ENCODE measurements at regions of chr14 and their contacts with region 1.

Region 1: GRCh38 chr14:64503478-64504309 is at the start of gene ZBTB25:
- DNase-seq: peak; percentile 96
- H3K4me3 ChIP-seq: peak within 1 kb of the TSS; percentile 71 to 88 (median 78)
- H3K27ac ChIP-seq: peak within 1 kb of the TSS; percentile 99 to 100 (median 99)
- H3K4me1 ChIP-seq: peaks cover 0 to 57% (median 54%) of the 10 kb centered on the region in 4 donors
- H3K27me3 ChIP-seq: no peaks in the 10 kb centered on the region
- CTCF ChIP-seq: no peak
- EP300 ChIP-seq: peak in 1 of 4 donors; percentile 31
- POLR2A ChIP-seq: peak; percentile 86 to 92
- total RNA-seq, gene ZBTB25: 9.6 to 24.6 (median 11.8) TPM

Region 2: GRCh38 chr14:64387694-64388532 is 115.8 kb before region 1 on chr14 and contains the start of gene MTHFD1:
- intact Hi-C with region 1: loop called (anchors 5 kb)
- DNase-seq: peak; percentile 100
- H3K4me3 ChIP-seq: peak within 1 kb of the TSS; percentile 62 to 72 (median 66)
- H3K27ac ChIP-seq: peak within 1 kb of the TSS; percentile 82 to 88 (median 88)
- H3K4me1 ChIP-seq: peaks cover 0 to 25% (median 21%) of the 10 kb centered on the region in 4 donors
- H3K27me3 ChIP-seq: no peaks in the 10 kb centered on the region
- CTCF ChIP-seq: no peak
- EP300 ChIP-seq: no peak
- POLR2A ChIP-seq: peak; percentile 38 to 42
- total RNA-seq, gene MTHFD1: 20.5 to 36.0 (median 26.1) TPM

Region 3: GRCh38 chr14:64465191-64465822 is 38.4 kb before region 1 on chr14 and contains the start of gene AKAP5:
- intact Hi-C with region 1: loop called (anchors 2 kb)
- DNase-seq: no peak
- H3K4me3 ChIP-seq: peak within 1 kb of the TSS; percentile 55 to 83 (median 74)
- H3K27ac ChIP-seq: peak within 1 kb of the TSS; percentile 72 to 80 (median 78)
- H3K4me1 ChIP-seq: peaks cover 0 to 14% (median 6%) of the 10 kb centered on the region in 4 donors
- H3K27me3 ChIP-seq: no peaks in the 10 kb centered on the region
- CTCF ChIP-seq: no peak
- EP300 ChIP-seq: no peak
- POLR2A ChIP-seq: no peak
- total RNA-seq, gene AKAP5: 0.33 to 1.7 (median 0.76) TPM

Region 4: DNA sequence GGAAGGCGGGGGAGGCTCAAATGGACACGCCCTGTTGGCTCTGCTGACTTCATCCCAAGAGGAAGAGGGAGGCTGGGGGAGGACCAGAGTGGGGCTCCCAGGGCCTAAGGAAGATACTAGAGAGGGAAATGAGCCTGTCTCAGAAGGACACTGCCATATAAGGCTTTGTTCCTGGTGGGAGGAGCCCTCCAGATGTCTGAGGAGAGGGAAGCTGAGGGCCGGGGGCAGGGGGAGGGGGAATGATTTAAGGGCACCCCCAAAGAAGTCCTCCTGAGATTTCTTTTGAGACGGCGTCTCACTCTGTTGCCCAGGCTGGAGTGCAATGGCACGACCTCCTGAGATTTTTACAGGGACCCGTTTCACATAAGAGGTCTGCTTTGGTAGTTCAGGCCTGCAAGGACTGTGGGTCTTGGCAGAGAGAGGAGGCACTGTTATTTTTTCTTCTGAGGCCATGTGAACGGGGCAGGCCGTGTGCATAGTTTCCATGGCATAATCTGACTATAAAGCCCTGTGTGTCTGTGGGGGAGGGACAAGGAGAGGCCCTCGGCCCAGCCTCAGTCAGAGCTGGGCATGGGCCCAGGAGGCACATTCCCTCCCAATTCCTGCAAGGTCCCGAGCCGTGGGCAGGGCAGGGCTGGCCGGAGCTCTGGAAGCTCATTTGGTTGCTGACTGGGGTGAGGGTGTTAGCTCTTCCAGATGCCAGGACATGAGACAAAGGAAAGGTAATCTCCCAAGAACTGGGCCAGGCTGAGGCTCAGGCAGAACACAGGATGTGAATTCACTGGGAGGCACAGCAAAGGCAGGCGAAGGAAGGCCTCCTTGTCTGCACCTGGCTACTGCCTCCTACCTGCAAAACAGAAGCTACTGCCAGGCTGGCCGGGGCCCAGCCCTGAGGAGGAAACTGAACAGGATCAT is 178.4 kb after region 1 on chr14:
- intact Hi-C with region 1: no loop called
- DNase-seq: peak; percentile 88
- H3K4me3 ChIP-seq: no peak overlapping the region
- H3K27ac ChIP-seq: peak overlapping the region; percentile 83 to 90 (median 87)
- H3K4me1 ChIP-seq: peaks cover 0 to 50% (median 47%) of the 10 kb centered on the region in 4 donors
- H3K27me3 ChIP-seq: no peaks in the 10 kb centered on the region
- CTCF ChIP-seq: no peak
- EP300 ChIP-seq: peak in 2 of 4 donors; percentile 13 to 74
- POLR2A ChIP-seq: peak in 1 of 2 donors; percentile 30

Region 5: DNA sequence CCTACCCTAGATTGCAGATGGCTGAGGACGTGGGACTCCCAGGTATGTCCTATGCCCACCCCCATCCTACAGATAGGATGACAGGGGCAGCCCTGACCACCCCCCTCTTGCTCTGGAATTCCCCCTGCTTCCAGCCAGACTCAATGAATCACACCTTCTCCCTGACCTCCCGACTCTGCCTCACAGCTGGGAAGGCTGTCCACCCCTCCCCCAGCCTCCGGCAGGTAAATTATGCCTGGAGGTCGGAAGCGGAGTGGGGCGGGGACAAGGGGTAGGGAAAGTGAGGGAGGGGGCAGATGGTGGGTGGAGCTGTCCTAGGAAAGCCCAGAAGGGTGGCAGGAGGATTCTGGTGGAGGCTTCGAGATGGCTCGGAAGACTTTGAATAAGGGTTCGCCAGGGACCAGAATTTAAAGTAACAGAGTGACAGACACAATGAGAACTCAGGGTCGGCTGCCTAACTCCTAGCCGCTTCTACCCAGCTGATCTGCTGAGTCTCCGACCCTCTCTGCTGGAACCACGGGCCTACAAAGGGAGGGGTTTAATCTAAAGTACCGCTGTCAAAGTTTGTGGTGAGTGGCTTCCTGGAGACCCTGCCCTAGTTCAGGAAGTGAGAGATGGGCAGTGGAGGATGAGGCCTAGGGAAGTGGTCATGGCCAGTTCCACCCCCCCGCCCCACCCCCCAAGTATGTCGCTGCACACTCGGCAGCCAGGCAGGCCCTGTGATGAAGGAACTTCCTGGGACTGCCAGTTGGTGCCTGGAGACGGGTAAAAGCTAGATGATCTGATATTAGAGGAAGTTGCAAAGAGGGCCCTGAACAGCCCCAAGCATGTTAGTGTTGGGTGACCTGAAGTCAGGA is 204.7 kb after region 1 on chr14:
- intact Hi-C with region 1: loop called (anchors 5 kb)
- DNase-seq: peak; percentile 77
- H3K4me3 ChIP-seq: peak overlapping the region in 2 of 4 donors; percentile 20 to 23
- H3K27ac ChIP-seq: peak overlapping the region; percentile 86 to 95 (median 92)
- H3K4me1 ChIP-seq: peaks cover 0 to 74% (median 70%) of the 10 kb centered on the region in 4 donors
- H3K27me3 ChIP-seq: no peaks in the 10 kb centered on the region
- CTCF ChIP-seq: no peak
- EP300 ChIP-seq: no peak
- POLR2A ChIP-seq: no peak

Measured in sigmoid colon (tissue), 7 donors.